Activated naive CD8-positive, alpha-beta T cell treated with anti-CD3 and anti-CD28 coated beads, Interleukin-2, amount 10 ng/mL, durations not matched to agents 7 days and 5 days (primary cell): ENCODE measurements at regions of chr7 and their contacts with region 1.

Region 1: GRCh38 chr7:150448789-150449147 is 1.7 kb upstream of the GIMAP8 start:
- DNase-seq: peak; percentile 83
- ATAC-seq: peak; percentile 31
- H3K4me3 Mint-ChIP-seq: peak overlapping the region; percentile 95
- H3K27ac Mint-ChIP-seq: peak overlapping the region; percentile 95
- H3K4me1 Mint-ChIP-seq: peaks cover 39% of the 10 kb centered on the region
- H3K27me3 Mint-ChIP-seq: no peaks in the 10 kb centered on the region

Region 2: GRCh38 chr7:150489782-150490181 is 41.0 kb after region 1 on chr7:
- POLR2A ChIA-PET with region 1: no interaction called
- DNase-seq: no peak
- ATAC-seq: no peak
- H3K4me3 Mint-ChIP-seq: no peak overlapping the region
- H3K27ac Mint-ChIP-seq: no peak overlapping the region
- H3K4me1 Mint-ChIP-seq: peaks cover 24% of the 10 kb centered on the region
- H3K27me3 Mint-ChIP-seq: no peaks in the 10 kb centered on the region

Region 3: DNA sequence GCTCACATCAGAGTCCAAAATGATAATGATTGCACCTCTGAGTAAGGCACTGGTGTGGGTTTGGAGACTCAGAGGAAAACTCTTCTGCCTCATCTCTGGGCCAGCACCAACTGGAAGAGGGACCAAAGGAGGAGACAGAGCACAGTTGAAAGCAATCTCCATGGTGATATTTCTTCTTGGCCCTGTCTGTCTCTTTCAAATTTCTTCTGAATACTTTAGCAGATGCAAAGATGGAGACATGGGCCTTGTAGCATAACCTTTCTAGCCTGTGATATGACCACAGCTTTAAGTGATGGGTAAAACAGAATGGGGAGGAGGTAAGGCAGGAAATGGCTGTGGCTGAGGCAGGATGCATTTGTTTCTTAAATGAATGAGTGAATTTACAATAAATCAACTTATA is 53.8 kb after region 1 on chr7:
- POLR2A ChIA-PET with region 1: interaction called, 55 read pairs
- DNase-seq: no peak
- ATAC-seq: peak; percentile 95
- H3K4me3 Mint-ChIP-seq: peak overlapping the region; percentile 82
- H3K27ac Mint-ChIP-seq: peak overlapping the region; percentile 97
- H3K4me1 Mint-ChIP-seq: peaks cover 62% of the 10 kb centered on the region
- H3K27me3 Mint-ChIP-seq: no peaks in the 10 kb centered on the region

Region 4: DNA sequence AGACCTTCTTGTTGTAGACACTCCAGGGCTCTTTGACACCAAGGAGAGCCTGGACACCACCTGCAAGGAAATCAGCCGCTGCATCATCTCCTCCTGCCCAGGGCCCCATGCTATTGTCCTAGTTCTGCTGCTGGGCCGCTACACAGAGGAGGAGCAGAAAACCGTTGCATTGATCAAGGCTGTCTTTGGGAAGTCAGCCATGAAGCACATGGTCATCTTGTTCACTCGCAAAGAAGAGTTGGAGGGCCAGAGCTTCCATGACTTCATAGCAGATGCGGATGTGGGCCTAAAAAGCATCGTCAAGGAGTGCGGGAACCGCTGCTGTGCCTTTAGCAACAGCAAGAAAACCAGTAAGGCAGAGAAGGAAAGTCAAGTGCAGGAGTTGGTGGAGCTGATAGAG is 71.4 kb after region 1 on chr7:
- POLR2A ChIA-PET with region 1: interaction called, 212 read pairs
- DNase-seq: peak; percentile 53
- ATAC-seq: peak; percentile 49
- H3K4me3 Mint-ChIP-seq: peak overlapping the region; percentile 100
- H3K27ac Mint-ChIP-seq: peak overlapping the region; percentile 90
- H3K4me1 Mint-ChIP-seq: peaks cover 25% of the 10 kb centered on the region
- H3K27me3 Mint-ChIP-seq: no peaks in the 10 kb centered on the region

Region 5: DNA sequence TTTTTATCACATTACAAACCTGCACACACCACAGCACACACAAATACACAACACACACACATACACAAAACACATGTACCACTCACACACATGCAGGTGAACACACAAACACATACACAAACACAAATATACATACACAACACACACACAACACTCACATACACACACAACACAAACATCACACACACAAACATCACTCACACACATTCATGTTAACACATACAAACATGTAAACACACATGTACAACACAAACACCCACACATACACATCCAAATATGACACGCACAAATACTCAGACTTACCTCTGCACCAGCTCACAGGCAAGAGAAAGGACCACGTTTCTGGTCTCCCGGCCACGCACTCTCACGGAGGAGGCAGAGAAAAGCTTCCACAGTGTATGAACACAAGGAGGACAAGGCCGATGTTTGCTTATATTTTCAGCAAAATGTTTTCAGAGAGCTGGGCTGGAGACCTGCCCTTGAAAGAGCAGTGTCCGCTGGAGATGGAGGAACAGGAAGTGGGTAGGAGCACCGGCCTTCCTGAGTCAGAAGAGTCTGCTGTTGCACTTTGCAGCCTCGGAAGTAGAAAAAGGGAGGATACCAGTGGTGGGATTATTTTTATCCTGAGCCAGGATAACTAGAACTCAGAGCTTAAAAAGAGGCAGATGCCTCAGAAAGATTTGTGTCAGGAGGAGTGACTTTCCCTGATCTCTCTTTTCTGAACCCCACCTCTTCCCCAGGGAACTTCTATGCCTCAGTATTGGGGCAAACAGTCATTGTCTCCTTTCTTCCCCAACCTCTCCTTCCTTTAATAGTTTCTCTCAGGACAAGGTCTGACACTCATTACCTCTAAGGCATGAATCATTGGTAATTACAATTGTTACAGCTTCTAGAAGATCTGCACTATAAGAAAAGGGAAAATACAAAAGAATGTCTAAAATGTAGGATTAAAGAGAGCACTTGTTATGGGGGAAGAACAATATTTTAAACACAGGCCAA is 183.4 kb after region 1 on chr7 and contains the start of gene GIMAP6:
- POLR2A ChIA-PET with region 1: interaction called, 26 read pairs
- DNase-seq: no peak
- ATAC-seq: peak; percentile 63
- H3K4me3 Mint-ChIP-seq: peak within 1 kb of the TSS; percentile 93
- H3K27ac Mint-ChIP-seq: peak within 1 kb of the TSS; percentile 94
- H3K4me1 Mint-ChIP-seq: peaks cover 46% of the 10 kb centered on the region
- H3K27me3 Mint-ChIP-seq: no peaks in the 10 kb centered on the region
- total RNA-seq, gene GIMAP6: 124 to 130 TPM

Region 6: GRCh38 chr7:150685219-150686029 is 236.7 kb after region 1 on chr7 and contains the start of gene GIMAP2:
- POLR2A ChIA-PET with region 1: interaction called, 11 read pairs
- DNase-seq: no peak
- ATAC-seq: peak; percentile 85
- H3K4me3 Mint-ChIP-seq: peak within 1 kb of the TSS; percentile 98
- H3K27ac Mint-ChIP-seq: peak within 1 kb of the TSS; percentile 98
- H3K4me1 Mint-ChIP-seq: peaks cover 64% of the 10 kb centered on the region
- H3K27me3 Mint-ChIP-seq: no peaks in the 10 kb centered on the region
- total RNA-seq, gene GIMAP2: 139 to 140 TPM

Region 7: GRCh38 chr7:150737265-150738055 is 288.7 kb after region 1 on chr7 and contains the start of gene GIMAP5:
- POLR2A ChIA-PET with region 1: interaction called, 28 read pairs
- DNase-seq: peak; percentile 67
- ATAC-seq: peak; percentile 77
- H3K4me3 Mint-ChIP-seq: peak within 1 kb of the TSS; percentile 98
- H3K27ac Mint-ChIP-seq: peak within 1 kb of the TSS; percentile 98
- H3K4me1 Mint-ChIP-seq: peaks cover 72% of the 10 kb centered on the region
- H3K27me3 Mint-ChIP-seq: no peaks in the 10 kb centered on the region
- total RNA-seq, gene GIMAP5: 112 to 123 TPM